Lower leg skin (tissue), 4 donors: ENCODE measurements at regions of chr6 and their contacts with region 1.

Region 1: GRCh38 chr6:94300424-94301144 is 881.2 kb upstream of the EPHA7 start:
- DNase-seq: no peak
- H3K4me3 ChIP-seq: no peak overlapping the region
- CTCF ChIP-seq: no peak
- POLR2A ChIP-seq: no peak

Region 2: GRCh38 chr6:94121091-94121490 is 179.5 kb before region 1 on chr6:
- intact Hi-C with region 1: loop called (anchors 5 kb)
- DNase-seq: no peak
- H3K4me3 ChIP-seq: no peak overlapping the region
- CTCF ChIP-seq: no peak
- POLR2A ChIP-seq: no peak

Region 3: DNA sequence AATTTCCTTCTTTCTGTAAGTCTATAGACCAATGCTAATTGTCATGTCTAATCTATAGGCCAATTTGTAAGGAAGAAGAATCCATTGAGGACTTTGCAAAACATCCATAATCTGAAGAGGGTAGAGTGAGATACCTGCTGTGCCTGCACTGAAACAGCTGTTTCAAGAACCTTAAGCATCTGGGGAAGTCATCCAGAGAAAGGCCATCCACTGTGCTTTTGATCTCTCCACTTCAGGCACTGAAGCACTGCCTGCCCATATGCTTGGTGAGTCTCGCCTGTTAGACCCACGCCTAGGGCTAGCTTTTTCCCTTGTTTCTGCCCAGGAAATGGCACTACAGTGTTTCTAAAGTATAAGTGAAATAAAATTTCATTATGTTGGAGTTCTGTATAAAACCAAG is 40.6 kb after region 1 on chr6:
- intact Hi-C with region 1: no loop called
- DNase-seq: no peak
- H3K4me3 ChIP-seq: no peak overlapping the region
- CTCF ChIP-seq: no peak
- POLR2A ChIP-seq: no peak

Region 4: DNA sequence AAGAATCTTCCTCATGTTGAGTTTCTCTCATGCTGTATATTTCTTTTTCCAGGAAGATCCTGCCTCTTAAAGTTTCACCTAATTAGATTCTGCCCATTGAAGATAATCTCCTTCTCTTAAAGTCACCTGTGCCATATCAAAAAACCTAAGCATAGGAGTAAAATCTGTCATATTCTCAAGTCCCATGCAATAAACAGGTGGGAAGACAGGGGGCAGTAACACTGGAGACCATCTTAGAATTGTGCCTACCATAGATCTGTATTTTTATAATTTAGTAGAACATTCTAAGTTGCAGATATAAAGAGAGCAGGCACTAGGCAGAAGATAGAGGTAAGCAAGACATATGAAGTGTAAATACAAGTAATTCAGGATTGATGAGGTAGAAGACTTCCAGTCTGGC is 513.2 kb after region 1 on chr6:
- intact Hi-C with region 1: no loop called
- DNase-seq: no peak
- H3K4me3 ChIP-seq: no peak overlapping the region
- CTCF ChIP-seq: no peak
- POLR2A ChIP-seq: no peak